ENCODE measurements at regions of chr20 and their contacts with region 1.

Region 1: GRCh38 chr20:62536871-62537401 is 61.1 kb upstream of the GATA5 start:
- DNase-seq: no peak
- H3K4me3 ChIP-seq: no peak overlapping the region
- H3K27ac ChIP-seq: no peak overlapping the region
- H3K4me1 ChIP-seq: no peaks in the 10 kb centered on the region
- H3K27me3 ChIP-seq: peaks cover 0 to 78% of the 10 kb centered on the region in 2 donors
- CTCF ChIP-seq: no peak
- POLR2A ChIP-seq: no peak

Region 2: GRCh38 chr20:61178561-61179071 is 1358.3 kb before region 1 on chr20:
- intact Hi-C with region 1: loop called (anchors 5 kb)
- DNase-seq: no peak
- H3K4me3 ChIP-seq: no peak overlapping the region
- H3K27ac ChIP-seq: no peak overlapping the region
- H3K4me1 ChIP-seq: no peaks in the 10 kb centered on the region
- H3K27me3 ChIP-seq: peaks cover 0 to 12% of the 10 kb centered on the region in 2 donors
- CTCF ChIP-seq: no peak
- POLR2A ChIP-seq: no peak

Region 3: GRCh38 chr20:62523473-62524203 is 13.3 kb before region 1 on chr20:
- intact Hi-C with region 1: no loop called
- DNase-seq: no peak
- H3K4me3 ChIP-seq: no peak overlapping the region
- H3K27ac ChIP-seq: no peak overlapping the region
- H3K4me1 ChIP-seq: no peaks in the 10 kb centered on the region
- H3K27me3 ChIP-seq: peaks cover 0 to 72% of the 10 kb centered on the region in 2 donors
- CTCF ChIP-seq: no peak
- POLR2A ChIP-seq: no peak

Region 4: DNA sequence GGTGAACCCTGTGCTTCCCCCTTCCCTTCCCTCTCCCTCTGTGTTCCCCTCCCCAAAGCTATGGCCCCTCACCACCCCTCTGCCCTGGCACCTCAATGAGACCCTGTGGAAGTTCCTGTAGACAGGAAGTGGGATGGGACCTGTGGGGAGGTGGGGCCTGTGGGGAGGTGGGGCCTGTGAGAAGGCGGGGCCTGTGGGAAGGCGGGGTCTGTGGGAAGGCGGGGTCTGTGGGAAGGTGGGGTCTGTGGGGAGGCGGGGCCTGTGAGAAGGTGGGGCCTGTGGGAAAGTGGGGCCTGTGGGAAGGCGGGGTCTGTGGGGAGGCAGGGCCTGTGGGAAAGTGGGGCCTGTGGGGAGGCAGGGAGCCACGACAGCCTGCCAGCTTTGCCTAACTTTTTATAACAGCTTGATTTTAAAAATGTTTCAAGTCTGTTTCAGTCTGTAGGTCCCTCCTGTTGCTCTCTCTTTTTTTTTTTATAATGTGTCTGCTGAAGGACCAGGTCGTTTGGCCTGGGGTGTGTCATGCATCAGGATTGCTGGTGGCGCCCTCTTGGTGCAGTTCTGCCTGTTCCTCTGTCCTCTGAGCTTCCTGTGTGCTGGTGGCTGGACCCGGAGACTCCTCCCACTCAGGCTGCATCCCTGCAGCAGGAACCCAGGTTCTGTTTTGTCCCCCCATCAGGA is 34.9 kb after region 1 on chr20:
- intact Hi-C with region 1: no loop called
- DNase-seq: no peak
- H3K4me3 ChIP-seq: no peak overlapping the region
- H3K27ac ChIP-seq: no peak overlapping the region
- H3K4me1 ChIP-seq: no peaks in the 10 kb centered on the region
- H3K27me3 ChIP-seq: peaks cover 0 to 92% of the 10 kb centered on the region in 2 donors
- CTCF ChIP-seq: no peak
- POLR2A ChIP-seq: no peak

Region 5: DNA sequence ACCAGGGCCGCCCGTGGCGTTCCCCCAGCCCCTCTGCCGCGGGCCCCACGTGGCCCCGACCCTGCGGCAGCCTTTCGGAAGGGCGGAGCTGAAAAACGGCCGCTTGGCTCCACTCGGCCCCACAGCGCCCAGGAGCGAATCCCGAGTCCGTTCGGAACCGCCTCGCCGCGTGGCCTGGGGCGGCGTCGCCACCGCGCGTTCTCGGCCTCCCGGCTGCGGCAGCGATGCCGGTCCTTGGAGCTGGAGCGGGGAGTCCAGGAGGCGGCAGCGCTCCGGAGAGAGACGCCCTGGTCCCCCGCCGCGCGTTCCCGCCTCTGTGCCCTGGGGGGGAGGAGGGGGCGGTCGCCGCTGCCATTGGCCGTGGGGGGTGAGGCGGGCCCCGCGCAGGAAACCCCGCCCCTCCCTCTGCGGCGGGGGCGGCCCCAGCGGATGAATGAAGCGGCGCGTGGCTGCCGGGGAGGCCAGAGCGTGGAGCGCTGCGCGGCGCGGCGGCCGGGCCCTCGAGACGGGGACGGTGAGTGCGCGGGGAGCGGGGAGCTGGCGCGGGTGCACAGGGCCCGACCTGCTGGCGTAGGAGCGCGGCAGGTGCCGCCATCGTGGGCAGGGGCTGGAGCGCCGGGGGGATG is 105.2 kb after region 1 on chr20 and contains the start of gene SLCO4A1:
- intact Hi-C with region 1: no loop called
- DNase-seq: peak in 1 of 2 donors; percentile 40
- H3K4me3 ChIP-seq: peak within 1 kb of the TSS; percentile 51 to 73 (median 60)
- H3K27ac ChIP-seq: peak within 1 kb of the TSS; percentile 25 to 73
- H3K4me1 ChIP-seq: peaks cover 6 to 14% of the 10 kb centered on the region in 2 donors
- H3K27me3 ChIP-seq: peaks cover 0 to 7% of the 10 kb centered on the region in 2 donors
- CTCF ChIP-seq: no peak
- POLR2A ChIP-seq: no peak
- total RNA-seq, gene SLCO4A1: 8.8 to 26.5 (median 15.4) TPM

Measured in breast epithelium (tissue), 4 donors.